Common myeloid progenitor, CD34-positive (primary cell): ENCODE measurements at regions of chr7 and their contacts with region 1.

Region 1: DNA sequence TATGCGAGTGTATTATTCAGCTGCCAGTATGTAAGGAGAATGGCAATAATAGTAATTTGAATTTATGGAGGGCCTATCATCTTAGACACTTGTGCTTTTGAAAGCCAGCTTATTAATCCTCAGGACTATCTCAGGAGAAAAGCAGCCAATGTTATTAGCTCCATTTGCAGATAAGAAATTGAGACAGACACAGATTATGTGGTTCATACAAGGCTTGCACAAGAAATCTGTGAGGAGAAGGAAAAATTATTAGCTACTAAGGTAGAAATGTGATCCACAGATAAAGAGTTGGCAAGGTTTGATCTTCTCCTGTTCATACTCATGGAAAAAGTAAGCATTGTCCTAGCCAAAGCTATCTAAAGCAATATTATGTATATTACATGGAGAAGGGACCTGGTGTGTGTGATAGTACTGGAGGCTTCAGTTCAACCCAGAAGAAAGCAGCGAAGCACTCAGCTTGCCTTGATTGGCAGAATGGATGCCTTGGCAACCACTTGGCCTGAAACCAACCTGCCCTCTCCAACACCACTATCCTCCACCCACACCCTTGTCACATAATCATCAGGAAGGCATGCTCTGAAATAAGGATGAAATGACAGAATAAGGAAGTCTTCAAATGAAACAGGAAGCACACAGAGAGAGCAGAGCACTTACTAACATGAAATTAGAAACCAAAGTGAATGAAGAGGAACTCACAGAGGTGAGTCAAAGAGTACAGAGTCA is 18.0 kb downstream of the MACC1 start:
- DNase-seq: peak; percentile 88 to 98 (median 97)
- H3K4me3 ChIP-seq: peak overlapping the region in 5 of 7 experiments; percentile 20 to 64 (median 42)
- H3K27ac ChIP-seq: peak overlapping the region; percentile 47 to 80
- H3K4me1 ChIP-seq: peaks cover 30 to 55% (median 42%) of the 10 kb centered on the region in 4 experiments
- H3K27me3 ChIP-seq: no peaks in the 10 kb centered on the region

Region 2: GRCh38 chr7:20219446-20220292 is 20.5 kb after region 1 on chr7:
- CTCF ChIA-PET with region 1: interaction called, 23 read pairs
- POLR2A ChIA-PET with region 1: interaction called, 4 read pairs
- DNase-seq: peak; percentile 99 to 100 (median 100)
- H3K4me3 ChIP-seq: peak overlapping the region in 2 of 7 experiments; percentile 41 to 46
- H3K27ac ChIP-seq: peak overlapping the region; percentile 90 to 92
- H3K4me1 ChIP-seq: peaks cover 41 to 82% (median 60%) of the 10 kb centered on the region in 4 experiments
- H3K27me3 ChIP-seq: no peaks in the 10 kb centered on the region

Region 3: GRCh38 chr7:20238754-20239324 is 39.7 kb after region 1 on chr7:
- CTCF ChIA-PET with region 1: no interaction called
- POLR2A ChIA-PET with region 1: no interaction called
- DNase-seq: peak in 2 of 3 donors; percentile 82 to 90
- H3K4me3 ChIP-seq: no peak overlapping the region
- H3K27ac ChIP-seq: no peak overlapping the region
- H3K4me1 ChIP-seq: peaks cover 0 to 8% (median 0%) of the 10 kb centered on the region in 4 experiments
- H3K27me3 ChIP-seq: no peaks in the 10 kb centered on the region